ENCODE measurements at regions of chrX and their contacts with region 1.

Region 1: GRCh38 chrX:2928191-2928763 is 862 bp downstream of the ARSD start:
- DNase-seq: peak in 1 of 2 experiments; percentile 52
- ATAC-seq: peak; percentile 79 to 82
- H3K4me3 ChIP-seq: peak overlapping the region; percentile 94
- H3K27ac ChIP-seq: peak overlapping the region; percentile 100
- H3K4me1 ChIP-seq: peaks cover 7% of the 10 kb centered on the region; the same call in 2 of the 3 replicates
- CTCF ChIP-seq: no peak
- EP300 ChIP-seq: no peak
- POLR2A ChIP-seq: no peak; the same call in none of the 2 replicates
- RAD21 ChIP-seq: no peak

Region 2: GRCh38 chrX:2967998-2968909 is 40.0 kb after region 1 on chrX:
- CTCF ChIA-PET with region 1: no interaction called
- POLR2A ChIA-PET with region 1: interaction called, 26 read pairs
- DNase-seq: no peak
- ATAC-seq: no peak
- H3K4me3 ChIP-seq: no peak overlapping the region
- H3K27ac ChIP-seq: no peak overlapping the region
- H3K4me1 ChIP-seq: peaks cover 11% of the 10 kb centered on the region
- CTCF ChIP-seq: no peak
- EP300 ChIP-seq: no peak
- POLR2A ChIP-seq: no peak
- RAD21 ChIP-seq: no peak

Region 3: GRCh38 chrX:2989565-2989964 is 61.3 kb after region 1 on chrX:
- CTCF ChIA-PET with region 1: no interaction called
- POLR2A ChIA-PET with region 1: no interaction called
- DNase-seq: no peak
- ATAC-seq: no peak
- H3K4me3 ChIP-seq: no peak overlapping the region
- H3K27ac ChIP-seq: no peak overlapping the region
- H3K4me1 ChIP-seq: no peaks in the 10 kb centered on the region
- CTCF ChIP-seq: no peak
- EP300 ChIP-seq: no peak
- POLR2A ChIP-seq: no peak
- RAD21 ChIP-seq: no peak

Measured in A549 (cell line).